CD4-positive, alpha-beta T cell (primary cell): ENCODE measurements at regions of chr17 and their contacts with region 1.

Region 1: GRCh38 chr17:59331129-59331928 is at the start of gene YPEL2:
- DNase-seq: peak; percentile 78 to 94 (median 88)
- ATAC-seq: peak; percentile 83
- H3K4me3 ChIP-seq: peak within 1 kb of the TSS; percentile 92
- H3K4me3 Mint-ChIP-seq: peak within 1 kb of the TSS; percentile 96
- H3K27ac ChIP-seq: peak within 1 kb of the TSS; percentile 35 to 49
- H3K27ac Mint-ChIP-seq: peak within 1 kb of the TSS; percentile 91
- H3K4me1 ChIP-seq: peaks cover 72% of the 10 kb centered on the region
- H3K4me1 Mint-ChIP-seq: peaks cover 83% of the 10 kb centered on the region
- H3K27me3 ChIP-seq: no peaks in the 10 kb centered on the region
- H3K27me3 Mint-ChIP-seq: no peaks in the 10 kb centered on the region
- CTCF ChIP-seq: no peak
- total RNA-seq, gene YPEL2: 69.1 to 71.6 TPM

Region 2: DNA sequence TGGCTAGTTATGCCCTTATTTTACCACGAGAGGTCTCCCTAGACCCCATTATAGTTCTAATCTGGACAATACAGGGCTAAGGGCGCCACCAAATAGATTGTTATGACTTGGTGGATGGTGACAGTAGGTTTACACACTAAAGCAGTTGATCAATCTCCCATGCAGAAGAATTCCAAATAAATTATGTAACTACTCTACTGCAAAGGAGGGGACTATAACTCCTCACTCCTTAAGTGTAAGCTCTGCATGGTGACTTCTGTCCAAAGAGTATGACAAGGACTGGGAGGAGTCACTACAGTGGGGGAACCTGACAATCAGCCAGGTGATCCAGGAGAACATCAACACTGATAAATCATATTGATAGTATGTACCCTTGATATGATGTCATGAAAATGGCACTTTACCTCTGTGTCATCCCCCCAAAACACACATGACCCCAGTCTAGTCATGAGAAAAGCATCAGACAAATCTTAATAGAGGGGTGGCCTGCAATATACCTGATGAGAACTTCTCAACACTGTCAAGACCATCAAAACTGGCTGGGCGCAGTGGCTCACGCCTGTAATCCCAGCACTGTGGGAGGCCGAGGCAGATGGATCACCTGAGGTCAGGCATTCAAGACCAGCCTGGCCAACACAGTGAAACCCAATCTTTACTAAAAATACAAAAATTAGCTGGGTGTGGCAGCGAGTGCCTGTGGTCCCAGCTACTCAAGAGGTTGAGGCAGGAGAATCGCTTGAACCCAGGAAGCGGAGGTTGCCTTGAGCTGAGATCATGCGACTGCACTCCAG is 20.0 kb before region 1 on chr17:
- CTCF ChIA-PET with region 1: interaction called, 9 read pairs
- POLR2A ChIA-PET with region 1: interaction called, 9 read pairs
- intact Hi-C with region 1: loop called in 1 of 2 experiments (anchors 2 kb)
- DNase-seq: peak in 7 of 14 experiments; percentile 18 to 80 (median 57)
- ATAC-seq: peak; percentile 99
- H3K4me3 ChIP-seq: no peak overlapping the region
- H3K4me3 Mint-ChIP-seq: no peak overlapping the region
- H3K27ac ChIP-seq: no peak overlapping the region
- H3K27ac Mint-ChIP-seq: no peak overlapping the region
- H3K4me1 ChIP-seq: no peaks in the 10 kb centered on the region
- H3K4me1 Mint-ChIP-seq: peaks cover 6% of the 10 kb centered on the region
- H3K27me3 ChIP-seq: no peaks in the 10 kb centered on the region
- H3K27me3 Mint-ChIP-seq: no peaks in the 10 kb centered on the region
- CTCF ChIP-seq: peak; percentile 89

Region 3: GRCh38 chr17:59355696-59356325 is 24.5 kb after region 1 on chr17:
- CTCF ChIA-PET with region 1: interaction called, 3 read pairs
- POLR2A ChIA-PET with region 1: interaction called, 9 read pairs
- intact Hi-C with region 1: loop called in 1 of 2 experiments (anchors 2 kb)
- DNase-seq: no peak
- ATAC-seq: no peak
- H3K4me3 ChIP-seq: no peak overlapping the region
- H3K4me3 Mint-ChIP-seq: no peak overlapping the region
- H3K27ac ChIP-seq: no peak overlapping the region
- H3K27ac Mint-ChIP-seq: peak overlapping the region; percentile 35
- H3K4me1 ChIP-seq: peaks cover 58% of the 10 kb centered on the region
- H3K4me1 Mint-ChIP-seq: peaks cover 80% of the 10 kb centered on the region
- H3K27me3 ChIP-seq: no peaks in the 10 kb centered on the region
- H3K27me3 Mint-ChIP-seq: no peaks in the 10 kb centered on the region
- CTCF ChIP-seq: no peak

Region 4: DNA sequence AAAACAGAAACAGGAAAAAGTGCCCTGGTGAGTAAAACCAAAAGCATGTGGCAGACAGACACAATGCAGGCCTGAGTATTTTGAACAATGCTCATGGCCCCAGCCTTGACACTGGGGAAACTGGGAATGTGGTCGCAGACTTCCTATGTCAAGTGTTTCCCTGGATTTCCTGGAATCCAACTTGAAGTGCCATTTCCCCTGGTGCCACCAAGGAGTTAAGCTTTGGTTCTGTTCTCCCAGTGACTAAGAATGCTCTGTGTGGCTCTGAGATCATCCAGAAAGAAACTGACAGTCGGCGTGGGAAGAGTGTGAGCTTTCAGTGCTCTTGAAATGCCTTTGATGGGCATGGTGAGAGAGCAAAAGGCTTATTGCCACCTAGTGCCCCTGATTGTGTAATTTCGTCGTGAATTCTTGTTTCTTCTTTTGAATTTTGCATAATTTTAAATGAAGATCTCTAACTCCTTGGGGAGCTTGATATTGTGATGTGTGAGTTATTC is 96.1 kb after region 1 on chr17:
- CTCF ChIA-PET with region 1: interaction called, 12 read pairs
- POLR2A ChIA-PET with region 1: interaction called, 3 read pairs
- intact Hi-C with region 1: no loop called
- DNase-seq: peak in 4 of 14 experiments; percentile 20 to 44 (median 30)
- ATAC-seq: peak; percentile 51
- H3K4me3 ChIP-seq: no peak overlapping the region
- H3K4me3 Mint-ChIP-seq: no peak overlapping the region
- H3K27ac ChIP-seq: no peak overlapping the region
- H3K27ac Mint-ChIP-seq: no peak overlapping the region
- H3K4me1 ChIP-seq: peaks cover 2% of the 10 kb centered on the region
- H3K4me1 Mint-ChIP-seq: peaks cover 6% of the 10 kb centered on the region
- H3K27me3 ChIP-seq: no peaks in the 10 kb centered on the region
- H3K27me3 Mint-ChIP-seq: no peaks in the 10 kb centered on the region
- CTCF ChIP-seq: no peak

Region 5: GRCh38 chr17:59815965-59816364 is 484.6 kb after region 1 on chr17:
- CTCF ChIA-PET with region 1: no interaction called
- POLR2A ChIA-PET with region 1: no interaction called
- intact Hi-C with region 1: no loop called
- DNase-seq: no peak
- ATAC-seq: no peak
- H3K4me3 ChIP-seq: no peak overlapping the region
- H3K4me3 Mint-ChIP-seq: no peak overlapping the region
- H3K27ac ChIP-seq: no peak overlapping the region
- H3K27ac Mint-ChIP-seq: no peak overlapping the region
- H3K4me1 ChIP-seq: no peaks in the 10 kb centered on the region
- H3K4me1 Mint-ChIP-seq: no peaks in the 10 kb centered on the region
- H3K27me3 ChIP-seq: no peaks in the 10 kb centered on the region
- H3K27me3 Mint-ChIP-seq: no peaks in the 10 kb centered on the region
- CTCF ChIP-seq: no peak